Panc1 (cell line): ENCODE measurements at regions of chr17 and their contacts with region 1.

Region 1: GRCh38 chr17:1275962-1276736 is 3.3 kb upstream of the TRARG1 start:
- DNase-seq: no peak
- ATAC-seq: peak; percentile 86
- H3K4me3 ChIP-seq: peak overlapping the region in 1 of 2 experiments; percentile 31; a peak in 2 of 4 replicates
- H3K27ac ChIP-seq: no peak overlapping the region
- H3K4me1 ChIP-seq: no peaks in the 10 kb centered on the region
- H3K27me3 ChIP-seq: no peaks in the 10 kb centered on the region
- CTCF ChIP-seq: peak; percentile 90

Region 2: DNA sequence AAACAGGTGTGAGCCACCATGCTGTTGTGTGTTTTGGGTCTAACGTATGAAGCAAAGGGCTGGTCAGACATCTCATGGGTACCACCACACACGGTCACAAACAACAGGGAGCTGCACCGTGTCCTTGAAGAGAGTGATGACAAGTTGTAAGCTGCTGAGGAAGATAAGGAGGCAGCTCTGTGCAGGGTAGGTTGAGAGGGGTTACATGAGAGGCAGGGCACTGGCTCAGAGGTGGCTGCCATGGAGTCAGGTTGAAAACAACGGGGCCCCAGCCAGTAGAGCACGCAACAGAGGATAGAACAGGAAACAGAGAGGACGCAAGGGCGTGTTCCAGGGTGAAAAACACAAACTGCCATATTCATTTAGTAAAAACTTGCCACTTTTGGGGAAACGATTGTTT is 55.6 kb after region 1 on chr17:
- CTCF ChIA-PET with region 1: interaction called, 6 read pairs
- POLR2A ChIA-PET with region 1: no interaction called
- in situ Hi-C with region 1: no loop called
- intact Hi-C with region 1: loop called (anchors 2 kb)
- DNase-seq: no peak
- ATAC-seq: no peak
- H3K4me3 ChIP-seq: no peak overlapping the region
- H3K27ac ChIP-seq: no peak overlapping the region
- H3K4me1 ChIP-seq: no peaks in the 10 kb centered on the region
- H3K27me3 ChIP-seq: no peaks in the 10 kb centered on the region
- CTCF ChIP-seq: no peak

Region 3: DNA sequence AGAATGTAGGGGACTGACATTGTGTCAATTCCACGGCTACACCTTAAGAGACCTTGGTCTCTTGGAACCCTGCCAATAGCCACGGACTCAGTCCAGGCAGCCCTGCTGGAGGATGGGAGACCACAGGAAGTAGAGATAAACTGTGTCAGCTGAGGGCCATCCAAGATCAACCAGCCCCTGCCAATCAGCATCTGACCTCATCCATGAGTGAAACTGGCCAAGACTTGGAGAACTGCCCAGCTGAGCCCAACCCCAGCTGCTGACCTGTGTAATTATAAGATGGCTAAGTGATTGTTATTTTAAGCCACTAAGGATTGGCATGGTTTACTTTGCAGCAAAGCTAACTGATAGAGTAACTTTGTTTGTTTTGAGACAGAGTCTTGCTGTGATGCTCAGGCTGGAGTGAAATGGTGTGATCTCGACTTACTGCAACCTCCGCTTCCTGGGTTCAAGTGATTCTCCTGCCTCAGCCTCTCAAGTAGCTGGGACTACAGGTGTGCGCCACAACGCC is 137.2 kb after region 1 on chr17:
- CTCF ChIA-PET with region 1: no interaction called
- POLR2A ChIA-PET with region 1: no interaction called
- in situ Hi-C with region 1: no loop called
- intact Hi-C with region 1: no loop called
- DNase-seq: peak; percentile 60
- ATAC-seq: peak; percentile 68
- H3K4me3 ChIP-seq: no peak overlapping the region
- H3K27ac ChIP-seq: no peak overlapping the region
- H3K4me1 ChIP-seq: no peaks in the 10 kb centered on the region; the same call in 1 of the 2 replicates
- H3K27me3 ChIP-seq: no peaks in the 10 kb centered on the region
- CTCF ChIP-seq: no peak

Region 4: GRCh38 chr17:1509290-1509881 is 233.2 kb after region 1 on chr17:
- CTCF ChIA-PET with region 1: no interaction called
- POLR2A ChIA-PET with region 1: no interaction called
- in situ Hi-C with region 1: no loop called
- intact Hi-C with region 1: no loop called
- DNase-seq: no peak
- ATAC-seq: no peak
- H3K4me3 ChIP-seq: no peak overlapping the region
- H3K27ac ChIP-seq: no peak overlapping the region
- H3K4me1 ChIP-seq: no peaks in the 10 kb centered on the region
- H3K27me3 ChIP-seq: no peaks in the 10 kb centered on the region
- CTCF ChIP-seq: no peak